ENCODE measurements at regions of chr3 and their contacts with region 1.

Region 1: GRCh38 chr3:64484289-64484992 is 203.4 kb downstream of the ADAMTS9 start:
- DNase-seq: peak; percentile 69
- H3K4me3 ChIP-seq: no peak overlapping the region
- H3K27ac ChIP-seq: no peak overlapping the region
- H3K4me1 ChIP-seq: peaks cover 10% of the 10 kb centered on the region
- H3K27me3 ChIP-seq: peaks cover 18% of the 10 kb centered on the region
- CTCF ChIP-seq: peak; percentile 90

Region 2: GRCh38 chr3:64030741-64031140 is 453.7 kb before region 1 on chr3:
- intact Hi-C with region 1: loop called (anchors 2 kb)
- DNase-seq: peak; percentile 65
- H3K4me3 ChIP-seq: peak overlapping the region; percentile 55
- H3K27ac ChIP-seq: no peak overlapping the region
- H3K4me1 ChIP-seq: peaks cover 7% of the 10 kb centered on the region
- H3K27me3 ChIP-seq: peaks cover 25% of the 10 kb centered on the region
- CTCF ChIP-seq: peak; percentile 90

Region 3: DNA sequence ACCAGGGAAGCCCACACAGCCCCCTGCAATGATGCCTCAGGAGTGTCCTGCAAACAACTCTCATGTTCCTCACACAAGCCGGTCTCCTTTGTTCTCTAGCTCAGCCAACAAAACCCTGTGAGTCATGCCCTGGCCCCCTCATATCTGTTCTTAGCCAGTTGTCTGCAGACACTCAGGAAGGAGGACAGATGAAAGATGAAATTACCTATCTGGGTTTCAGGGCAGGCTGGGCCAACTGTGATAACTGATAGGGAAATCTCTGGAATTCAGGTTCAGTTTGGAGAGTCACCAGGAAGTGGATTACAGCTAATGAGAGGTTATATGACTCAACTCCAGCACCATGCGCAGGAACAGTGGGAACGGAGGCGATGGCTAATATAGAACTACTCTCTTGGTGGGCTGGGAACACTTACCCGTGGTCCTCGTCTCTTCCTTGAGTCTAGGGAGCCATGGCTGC is 555.3 kb after region 1 on chr3:
- intact Hi-C with region 1: no loop called
- DNase-seq: no peak
- H3K4me3 ChIP-seq: no peak overlapping the region
- H3K27ac ChIP-seq: no peak overlapping the region
- H3K4me1 ChIP-seq: no peaks in the 10 kb centered on the region
- H3K27me3 ChIP-seq: no peaks in the 10 kb centered on the region
- CTCF ChIP-seq: no peak

Measured in left ventricle myocardium inferior (tissue), 1 donor.